PC-3 (cell line): ENCODE measurements at regions of chr18 and their contacts with region 1.

Region 1: GRCh38 chr18:12589448-12589847 is 68.5 kb downstream of the SPIRE1 start:
- DNase-seq: no peak
- ATAC-seq: peak; percentile 27; the same call in 1 of the 2 replicates
- H3K4me3 ChIP-seq: no peak overlapping the region
- H3K27ac ChIP-seq: no peak overlapping the region
- H3K4me1 ChIP-seq: no peaks in the 10 kb centered on the region
- H3K27me3 ChIP-seq: no peaks in the 10 kb centered on the region
- CTCF ChIP-seq: no peak

Region 2: GRCh38 chr18:12645254-12646203 is 56.1 kb after region 1 on chr18:
- CTCF ChIA-PET with region 1: no interaction called
- POLR2A ChIA-PET with region 1: interaction called, 5 read pairs
- intact Hi-C with region 1: loop called (anchors 10 kb)
- DNase-seq: peak; percentile 49
- ATAC-seq: no peak
- H3K4me3 ChIP-seq: no peak overlapping the region
- H3K27ac ChIP-seq: peak overlapping the region; percentile 38
- H3K4me1 ChIP-seq: peaks cover 52% of the 10 kb centered on the region
- H3K27me3 ChIP-seq: no peaks in the 10 kb centered on the region
- CTCF ChIP-seq: no peak